Activated T-helper 2 cell treated with anti-CD3 and anti-CD28 coated beads, Interferon-gamma antibody, Interleukin-2, Interleukin-4, amounts not matched to agents 10 μg/mL and 5 μg/mL and 100 μg/mL, durations not matched to agents 14 hours and 24 hours and 36 hours (primary cell): ENCODE measurements at regions of chr14 and their contacts with region 1.

Region 1: GRCh38 chr14:65704850-65705249 is 292.3 kb downstream of the FUT8 start:
- DNase-seq: no peak
- H3K4me3 Mint-ChIP-seq: no peak overlapping the region
- H3K27ac Mint-ChIP-seq: no peak overlapping the region
- H3K4me1 Mint-ChIP-seq: peaks cover 6% of the 10 kb centered on the region
- H3K27me3 Mint-ChIP-seq: no peaks in the 10 kb centered on the region

Region 2: DNA sequence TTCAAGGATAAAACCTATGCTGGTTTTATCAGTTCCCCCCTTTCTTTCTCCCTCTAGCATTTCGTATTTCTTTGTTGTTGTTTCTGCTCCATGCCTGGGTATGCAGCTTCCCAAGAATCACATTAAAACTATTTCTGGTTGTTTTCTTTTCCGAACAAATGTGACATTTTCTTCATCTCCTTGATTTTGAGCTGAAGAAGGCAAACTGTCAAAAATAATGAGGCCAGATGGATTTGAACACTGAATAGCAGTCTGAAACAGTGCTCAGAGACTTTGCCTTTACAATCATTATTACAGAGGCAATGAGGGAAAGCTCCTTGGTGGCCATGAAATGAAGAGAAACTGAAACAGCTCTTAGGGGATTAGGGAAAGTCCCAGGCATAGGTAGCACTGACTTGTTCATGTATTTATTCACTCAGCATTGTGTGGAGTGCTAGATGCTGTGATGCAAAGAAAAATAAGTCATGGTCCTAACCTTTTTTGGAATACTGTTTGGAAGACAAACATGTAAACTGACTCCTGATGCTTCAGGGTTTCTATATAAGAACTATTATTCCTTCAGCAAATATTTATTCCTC is 27.2 kb after region 1 on chr14:
- intact Hi-C with region 1: loop called (anchors 1 kb)
- DNase-seq: no peak
- H3K4me3 Mint-ChIP-seq: no peak overlapping the region
- H3K27ac Mint-ChIP-seq: peak overlapping the region; percentile 73
- H3K4me1 Mint-ChIP-seq: peaks cover 12% of the 10 kb centered on the region
- H3K27me3 Mint-ChIP-seq: no peaks in the 10 kb centered on the region

Region 3: DNA sequence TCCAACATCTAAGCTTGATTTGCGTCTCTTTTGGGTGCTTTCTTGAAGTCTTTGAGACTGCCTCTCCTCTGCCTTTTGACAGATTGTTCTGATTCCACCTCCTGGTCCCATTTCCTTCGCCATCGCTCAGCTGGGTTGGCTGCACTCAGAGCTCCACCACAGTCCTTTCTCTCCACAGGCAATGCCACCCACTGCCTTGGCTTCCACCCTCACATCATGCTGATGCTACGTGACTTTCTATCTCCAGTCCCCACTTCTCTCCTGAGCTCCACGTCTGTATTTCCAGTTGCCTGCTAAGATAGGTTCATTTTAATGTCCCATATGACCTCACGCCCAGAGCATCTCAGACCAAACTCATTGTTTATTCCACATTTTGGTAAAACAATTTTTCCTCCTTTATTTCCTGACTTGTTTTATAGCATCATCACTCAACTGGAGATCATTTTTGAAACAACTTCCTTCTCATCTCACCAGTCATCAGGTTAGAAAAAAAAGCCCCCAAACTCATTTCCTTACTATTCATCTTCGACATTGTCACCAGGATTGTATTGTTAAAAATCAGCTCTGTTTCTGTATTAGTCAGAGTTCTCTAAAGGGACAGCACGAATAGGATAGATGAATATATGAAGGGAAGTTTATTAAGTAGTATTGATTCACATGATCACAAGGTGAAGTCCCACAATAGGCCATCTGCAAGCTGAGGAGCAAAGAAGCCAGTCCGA is 100.1 kb after region 1 on chr14:
- intact Hi-C with region 1: loop called (anchors 10 kb)
- DNase-seq: no peak
- H3K4me3 Mint-ChIP-seq: no peak overlapping the region
- H3K27ac Mint-ChIP-seq: no peak overlapping the region
- H3K4me1 Mint-ChIP-seq: peaks cover 14% of the 10 kb centered on the region
- H3K27me3 Mint-ChIP-seq: peaks cover 4% of the 10 kb centered on the region